ENCODE measurements at regions of chr9 and their contacts with region 1.

Region 1: DNA sequence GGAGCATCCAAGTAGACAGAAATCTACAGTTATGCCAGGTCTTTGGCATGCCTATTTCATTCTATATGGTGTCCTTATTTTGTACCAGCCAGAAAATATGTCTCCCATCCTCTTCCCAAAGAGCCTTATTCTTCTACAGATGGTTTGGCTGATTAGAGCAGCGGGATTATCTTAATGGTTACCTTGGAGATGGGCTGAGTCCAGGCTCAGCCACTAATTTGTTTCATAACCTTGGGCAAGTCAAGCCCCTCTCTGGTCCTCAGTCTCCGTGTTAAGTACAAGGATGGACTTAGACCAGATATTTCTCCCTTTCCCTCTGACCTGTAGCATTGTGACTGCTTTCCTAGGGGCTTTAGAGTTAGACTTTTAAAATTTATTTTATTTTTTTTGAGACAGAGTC is 11.1 kb upstream of the GLE1 start:
- DNase-seq: no peak
- ATAC-seq: no peak
- H3K4me3 ChIP-seq: no peak overlapping the region
- H3K4me3 Mint-ChIP-seq: no peak overlapping the region
- H3K27ac ChIP-seq: no peak overlapping the region
- H3K27ac Mint-ChIP-seq: peak overlapping the region; percentile 38
- H3K4me1 ChIP-seq: peaks cover 9 to 11% of the 10 kb centered on the region in 2 donors
- H3K4me1 Mint-ChIP-seq: peaks cover 10% of the 10 kb centered on the region
- H3K27me3 ChIP-seq: no peaks in the 10 kb centered on the region
- H3K27me3 Mint-ChIP-seq: no peaks in the 10 kb centered on the region
- CTCF ChIP-seq: no peak

Region 2: GRCh38 chr9:128479262-128479661 is 14.2 kb before region 1 on chr9:
- CTCF ChIA-PET with region 1: no interaction called
- POLR2A ChIA-PET with region 1: interaction called, 10 read pairs
- intact Hi-C with region 1: no loop called
- DNase-seq: no peak
- ATAC-seq: no peak
- H3K4me3 ChIP-seq: no peak overlapping the region
- H3K4me3 Mint-ChIP-seq: no peak overlapping the region
- H3K27ac ChIP-seq: no peak overlapping the region
- H3K27ac Mint-ChIP-seq: no peak overlapping the region
- H3K4me1 ChIP-seq: no peaks in the 10 kb centered on the region
- H3K4me1 Mint-ChIP-seq: no peaks in the 10 kb centered on the region
- H3K27me3 ChIP-seq: no peaks in the 10 kb centered on the region
- H3K27me3 Mint-ChIP-seq: no peaks in the 10 kb centered on the region
- CTCF ChIP-seq: no peak